ENCODE measurements at regions of chr7 and their contacts with region 1.

Region 1: DNA sequence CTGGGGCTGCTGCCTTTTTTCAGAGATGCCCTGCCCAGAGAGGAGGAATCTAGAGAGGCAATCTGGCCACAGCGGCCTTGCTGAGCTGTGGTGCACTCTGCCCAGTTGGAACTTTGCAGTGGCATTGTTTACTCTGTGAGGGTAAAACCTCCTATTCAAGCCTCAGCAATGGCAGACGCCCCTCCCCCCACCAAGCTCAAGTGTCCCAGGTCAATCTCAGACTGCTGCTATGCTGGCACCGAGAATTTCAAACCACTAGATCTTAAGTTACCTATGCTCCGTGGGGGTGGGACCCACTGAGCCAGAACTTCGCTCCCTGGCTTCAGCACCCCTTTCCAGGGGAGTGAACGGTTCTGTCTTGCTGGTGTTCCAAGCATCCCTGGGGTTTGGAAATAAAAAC is 77.2 kb downstream of the EXOC4 start:
- DNase-seq: peak; percentile 24
- ATAC-seq: peak; percentile 68
- H3K4me3 Mint-ChIP-seq: no peak overlapping the region
- H3K27ac Mint-ChIP-seq: peak overlapping the region; percentile 43; the same call in 1 of the 2 replicates
- H3K4me1 Mint-ChIP-seq: peaks cover 15% of the 10 kb centered on the region
- H3K27me3 Mint-ChIP-seq: no peaks in the 10 kb centered on the region
- CTCF ChIP-seq: no peak

Region 2: GRCh38 chr7:133344275-133344674 is 14.2 kb after region 1 on chr7:
- CTCF ChIA-PET with region 1: interaction called, 21 read pairs
- POLR2A ChIA-PET with region 1: no interaction called
- DNase-seq: no peak
- ATAC-seq: no peak
- H3K4me3 Mint-ChIP-seq: no peak overlapping the region
- H3K27ac Mint-ChIP-seq: no peak overlapping the region
- H3K4me1 Mint-ChIP-seq: peaks cover 48% of the 10 kb centered on the region
- H3K27me3 Mint-ChIP-seq: no peaks in the 10 kb centered on the region
- CTCF ChIP-seq: no peak